Activated naive CD4-positive, alpha-beta T cell treated with anti-CD3 and anti-CD28 coated beads for 36 hours (primary cell): ENCODE measurements at regions of chr14 and their contacts with region 1.

Region 1: GRCh38 chr14:64971943-64972791 is at the start of gene RAB15:
- DNase-seq: peak; percentile 33
- H3K4me3 Mint-ChIP-seq: peak within 1 kb of the TSS; percentile 75
- H3K27ac Mint-ChIP-seq: no peak within 1 kb of the TSS
- H3K4me1 Mint-ChIP-seq: peaks cover 10% of the 10 kb centered on the region
- H3K27me3 Mint-ChIP-seq: no peaks in the 10 kb centered on the region
- total RNA-seq, gene RAB15: 2.4 TPM

Region 2: DNA sequence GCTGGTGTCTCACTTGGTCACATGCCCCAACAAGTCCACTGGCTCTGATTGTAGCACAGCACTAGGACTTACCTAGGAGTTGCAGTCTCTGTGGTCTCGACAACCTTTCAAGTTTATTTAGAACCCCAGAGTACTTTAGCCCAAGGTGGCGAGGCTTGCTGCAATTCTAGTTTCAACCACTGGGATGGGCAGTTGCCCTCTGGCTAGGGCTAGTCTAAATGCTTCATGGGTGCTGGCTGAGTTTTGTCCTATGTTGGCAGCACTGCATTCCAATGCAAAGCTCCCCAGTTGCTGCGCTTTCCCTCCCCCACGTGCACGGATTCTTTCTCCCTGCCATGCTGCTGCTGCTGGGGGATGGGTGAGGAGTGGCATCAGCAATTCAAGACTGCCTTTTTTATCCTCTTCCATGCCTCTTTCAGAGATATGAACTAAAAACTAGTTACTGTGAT is 911.5 kb before region 1 on chr14:
- CTCF ChIA-PET with region 1: no interaction called
- intact Hi-C with region 1: no loop called
- DNase-seq: peak; percentile 28
- H3K4me3 Mint-ChIP-seq: no peak overlapping the region
- H3K27ac Mint-ChIP-seq: no peak overlapping the region
- H3K4me1 Mint-ChIP-seq: no peaks in the 10 kb centered on the region
- H3K27me3 Mint-ChIP-seq: no peaks in the 10 kb centered on the region

Region 3: DNA sequence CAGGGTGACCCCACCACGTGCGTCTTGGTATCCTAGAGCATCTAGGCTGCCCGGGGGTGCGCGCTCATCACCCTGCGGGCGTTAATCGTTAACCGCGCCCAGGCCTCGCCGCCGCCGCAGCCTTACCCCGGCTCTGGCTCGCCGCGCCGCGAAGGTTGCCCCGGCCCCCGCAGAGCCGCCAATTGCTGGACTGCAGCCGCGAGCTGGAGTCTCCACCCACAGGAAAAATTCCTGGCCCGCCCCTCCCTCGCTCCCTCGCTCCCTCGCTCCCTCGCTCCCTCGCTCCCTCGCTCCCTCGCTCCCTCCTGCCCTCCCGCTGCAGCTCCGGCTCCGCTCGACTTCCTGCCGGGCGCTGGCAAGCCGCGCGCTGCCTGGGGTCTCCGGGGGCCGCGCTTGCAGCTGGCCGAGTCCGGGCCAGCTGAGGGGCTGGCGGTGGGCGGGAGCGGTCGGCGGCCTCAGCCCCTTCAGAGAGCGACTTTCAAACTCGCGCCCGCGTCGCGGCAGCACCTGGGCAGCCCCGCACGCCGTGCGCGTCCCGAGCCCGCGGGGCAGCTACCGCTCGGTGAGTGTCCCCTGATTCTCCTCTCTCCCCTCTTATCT is 267.9 kb before region 1 on chr14 and contains the start of gene PLEKHG3:
- CTCF ChIA-PET with region 1: no interaction called
- intact Hi-C with region 1: no loop called
- DNase-seq: peak; percentile 25
- H3K4me3 Mint-ChIP-seq: peak within 1 kb of the TSS; percentile 60
- H3K27ac Mint-ChIP-seq: no peak within 1 kb of the TSS
- H3K4me1 Mint-ChIP-seq: peaks cover 39% of the 10 kb centered on the region
- H3K27me3 Mint-ChIP-seq: peaks cover 42% of the 10 kb centered on the region
- total RNA-seq, gene PLEKHG3: 0.48 to 1.1 TPM

Region 4: DNA sequence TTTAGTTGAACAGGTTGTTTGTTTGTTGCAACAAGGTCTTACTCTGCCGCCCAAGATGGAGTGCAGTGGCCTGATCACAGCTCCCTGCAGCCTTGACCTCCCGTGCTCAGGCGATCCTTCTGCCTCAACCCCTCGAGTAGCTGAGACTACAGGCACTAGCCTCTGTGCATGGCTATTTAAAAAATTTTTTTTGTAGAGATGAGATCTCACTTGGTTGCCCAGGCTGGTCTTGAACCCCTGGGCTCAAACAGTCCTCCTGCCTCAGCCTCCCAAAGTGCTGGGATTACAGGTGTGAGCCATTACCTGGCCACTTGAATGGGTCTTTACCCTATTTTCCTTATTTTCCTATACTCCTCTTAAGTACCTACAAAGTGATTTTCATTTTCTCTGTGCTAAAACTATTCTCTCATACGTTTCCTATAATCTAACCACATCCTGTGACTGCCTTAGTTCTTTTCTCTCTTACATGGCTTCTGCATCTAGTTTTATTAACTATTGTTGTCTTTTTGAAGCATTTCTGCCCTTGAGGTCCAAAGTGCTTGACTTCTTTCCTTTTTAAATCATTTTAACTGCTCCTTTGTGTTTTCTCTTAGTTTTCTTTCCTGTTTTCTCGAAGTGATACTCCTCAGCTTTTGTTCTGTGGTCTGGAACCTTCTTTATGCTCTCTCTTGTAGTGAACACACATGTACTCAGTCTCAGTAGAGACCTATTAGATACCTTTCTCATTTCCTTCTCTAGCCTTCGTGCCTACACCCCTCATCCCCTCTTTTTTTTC is 43.7 kb before region 1 on chr14:
- CTCF ChIA-PET with region 1: no interaction called
- intact Hi-C with region 1: loop called (anchors 2 kb)
- DNase-seq: no peak
- H3K4me3 Mint-ChIP-seq: no peak overlapping the region
- H3K27ac Mint-ChIP-seq: no peak overlapping the region
- H3K4me1 Mint-ChIP-seq: peaks cover 25% of the 10 kb centered on the region
- H3K27me3 Mint-ChIP-seq: no peaks in the 10 kb centered on the region

Region 5: DNA sequence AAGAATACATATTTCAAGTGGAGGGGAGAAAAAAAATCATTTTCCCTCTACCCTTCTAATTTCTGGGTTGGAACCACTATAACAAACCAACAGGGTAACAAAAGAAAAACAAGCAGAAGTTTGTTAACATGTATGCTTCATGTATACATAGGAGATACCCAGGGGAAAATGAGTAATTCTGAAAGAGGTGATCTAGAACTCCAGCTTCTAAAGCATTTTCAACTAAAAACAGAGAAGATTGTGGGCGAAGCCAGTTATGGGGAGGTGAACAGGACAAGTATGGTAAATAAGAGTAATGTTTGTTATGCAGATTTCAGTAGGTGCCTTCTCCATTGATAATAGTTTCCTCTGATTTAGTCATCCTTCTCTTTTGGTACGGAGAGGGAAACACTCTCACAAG is 31.2 kb after region 1 on chr14:
- CTCF ChIA-PET with region 1: no interaction called
- intact Hi-C with region 1: no loop called
- DNase-seq: no peak
- H3K4me3 Mint-ChIP-seq: no peak overlapping the region
- H3K27ac Mint-ChIP-seq: no peak overlapping the region
- H3K4me1 Mint-ChIP-seq: peaks cover 30% of the 10 kb centered on the region
- H3K27me3 Mint-ChIP-seq: no peaks in the 10 kb centered on the region